ENCODE measurements at regions of chrX and their contacts with region 1.

Region 1: GRCh38 chrX:23907498-23908218 is at the starts of genes APOO and CXorf58:
- DNase-seq: peak; percentile 87
- ATAC-seq: peak; percentile 97
- H3K4me3 ChIP-seq: peak within 1 kb of the TSS; percentile 52
- H3K27ac ChIP-seq: peak within 1 kb of the TSS; percentile 76
- H3K4me1 ChIP-seq: no peaks in the 10 kb centered on the region
- H3K27me3 ChIP-seq: no peaks in the 10 kb centered on the region
- CTCF ChIP-seq: peak; percentile 85
- POLR2A ChIP-seq: no peak
- RAD21 ChIP-seq: peak; percentile 52
- total RNA-seq, gene APOO: 9.0 and 11.4 TPM in 2 replicates
- total RNA-seq, gene CXorf58: not detected in 2 replicates

Region 2: GRCh38 chrX:23742697-23743622 is 164.7 kb before region 1 on chrX and contains the start of gene ACOT9:
- CTCF ChIA-PET with region 1: interaction called, 3 read pairs
- POLR2A ChIA-PET with region 1: interaction called, 3 read pairs
- dilution Hi-C with region 1: no loop called
- in situ Hi-C with region 1: loop called (anchors 10 kb)
- intact Hi-C with region 1: no loop called
- DNase-seq: peak; percentile 95
- ATAC-seq: peak; percentile 98
- H3K4me3 ChIP-seq: peak within 1 kb of the TSS; percentile 94
- H3K27ac ChIP-seq: peak within 1 kb of the TSS; percentile 96
- H3K4me1 ChIP-seq: no peaks in the 10 kb centered on the region
- H3K27me3 ChIP-seq: no peaks in the 10 kb centered on the region
- CTCF ChIP-seq: no peak
- POLR2A ChIP-seq: peak; percentile 78
- RAD21 ChIP-seq: no peak
- total RNA-seq, gene ACOT9: 47.3 and 63.6 TPM in 2 replicates

Region 3: DNA sequence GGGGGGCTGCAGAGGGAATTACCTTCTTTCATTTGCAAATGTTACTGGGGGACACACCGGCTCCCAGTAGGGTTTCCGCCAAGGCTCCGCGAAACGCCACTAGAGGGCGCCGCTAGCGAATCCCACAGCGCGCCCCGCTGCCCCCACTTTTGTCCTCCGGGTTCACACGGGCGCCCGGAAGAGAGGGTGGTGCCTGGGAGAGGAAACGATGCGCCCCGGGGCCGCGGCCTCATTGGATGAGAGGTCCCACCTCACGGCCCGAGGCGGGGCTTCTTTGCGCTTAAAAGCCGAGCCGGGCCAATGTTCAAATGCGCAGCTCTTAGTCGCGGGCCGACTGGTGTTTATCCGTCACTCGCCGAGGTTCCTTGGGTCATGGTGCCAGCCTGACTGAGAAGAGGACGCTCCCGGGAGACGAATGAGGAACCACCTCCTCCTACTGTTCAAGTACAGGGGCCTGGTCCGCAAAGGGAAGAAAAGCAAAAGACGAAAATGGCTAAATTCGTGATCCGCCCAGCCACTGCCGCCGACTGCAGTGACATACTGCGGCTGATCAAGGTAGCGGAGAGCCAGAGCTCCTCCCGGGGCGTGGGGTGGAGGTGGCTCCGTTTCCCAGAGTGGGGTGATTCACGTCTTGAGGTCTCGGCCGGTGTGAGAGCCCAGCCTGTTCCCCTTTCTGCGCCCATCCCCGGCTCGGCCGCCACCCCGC is 124.6 kb before region 1 on chrX and contains the start of gene SAT1:
- CTCF ChIA-PET with region 1: interaction called, 34 read pairs
- POLR2A ChIA-PET with region 1: interaction called, 4 read pairs
- dilution Hi-C with region 1: no loop called
- in situ Hi-C with region 1: loop called (anchors 10 kb)
- intact Hi-C with region 1: loop called (anchors 1 kb)
- DNase-seq: peak; percentile 91
- ATAC-seq: peak; percentile 92
- H3K4me3 ChIP-seq: peak within 1 kb of the TSS; percentile 74
- H3K27ac ChIP-seq: peak within 1 kb of the TSS; percentile 78
- H3K4me1 ChIP-seq: no peaks in the 10 kb centered on the region; the same call in 1 of the 2 replicates
- H3K27me3 ChIP-seq: no peaks in the 10 kb centered on the region
- CTCF ChIP-seq: peak; percentile 69
- POLR2A ChIP-seq: peak; percentile 100
- RAD21 ChIP-seq: peak; percentile 58
- total RNA-seq, gene SAT1: 55.9 and 112 TPM in 2 replicates

Region 4: DNA sequence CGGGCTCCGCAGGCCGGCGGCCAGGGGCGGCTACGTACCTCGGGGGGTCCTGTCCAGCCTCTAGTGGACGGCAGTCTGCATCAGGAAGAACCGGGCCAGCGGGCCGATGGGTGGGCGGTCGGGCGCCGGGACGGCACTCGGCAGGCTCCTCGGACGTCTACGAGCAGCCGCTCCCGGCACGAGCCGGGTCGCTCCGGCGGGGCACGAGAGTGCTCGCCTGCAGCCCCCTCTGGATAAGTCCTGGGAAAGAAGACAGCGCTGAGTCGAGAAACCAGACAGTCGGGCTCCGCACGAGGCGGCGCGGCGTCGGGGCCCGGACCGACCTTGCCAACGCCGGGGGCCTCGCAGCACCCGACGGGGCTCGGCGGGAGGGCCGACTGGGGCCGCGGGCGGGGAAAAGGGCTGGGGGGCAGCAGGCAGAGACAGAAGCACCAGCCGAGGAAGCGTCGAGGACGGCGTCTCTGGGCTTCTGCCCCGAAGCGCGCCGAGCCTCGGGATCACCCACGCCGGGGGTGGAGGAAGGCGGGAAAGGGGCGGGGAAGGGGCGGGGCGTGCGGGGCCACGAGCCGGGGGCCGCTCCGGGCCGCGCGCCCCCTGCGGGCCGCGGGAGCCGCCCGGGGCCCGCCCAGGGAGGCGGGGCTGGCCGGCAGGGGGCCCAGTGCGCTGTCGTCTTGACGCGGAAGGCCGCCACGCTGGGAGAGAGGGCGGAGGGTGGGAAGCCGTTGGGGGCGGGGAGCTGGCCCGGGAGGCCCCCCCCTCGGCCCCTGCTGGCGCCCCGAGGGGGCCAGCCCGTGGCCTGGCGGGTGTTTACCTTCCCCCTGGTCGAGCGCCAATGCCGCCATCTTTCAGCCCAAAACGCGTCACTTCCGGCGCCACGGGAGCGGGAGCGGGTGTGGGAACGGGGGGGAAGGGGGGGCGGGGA is 117.4 kb after region 1 on chrX:
- CTCF ChIA-PET with region 1: interaction called, 4 read pairs
- POLR2A ChIA-PET with region 1: interaction called, 4 read pairs
- dilution Hi-C with region 1: no loop called
- in situ Hi-C with region 1: no loop called
- intact Hi-C with region 1: loop called (anchors 1 kb)
- DNase-seq: peak; percentile 89
- ATAC-seq: peak; percentile 93
- H3K4me3 ChIP-seq: peak overlapping the region; percentile 99
- H3K27ac ChIP-seq: peak overlapping the region; percentile 70
- H3K4me1 ChIP-seq: no peaks in the 10 kb centered on the region
- H3K27me3 ChIP-seq: no peaks in the 10 kb centered on the region; the same call in none of the 2 replicates
- CTCF ChIP-seq: peak; percentile 53
- POLR2A ChIP-seq: peak; percentile 94
- RAD21 ChIP-seq: no peak

Region 5: DNA sequence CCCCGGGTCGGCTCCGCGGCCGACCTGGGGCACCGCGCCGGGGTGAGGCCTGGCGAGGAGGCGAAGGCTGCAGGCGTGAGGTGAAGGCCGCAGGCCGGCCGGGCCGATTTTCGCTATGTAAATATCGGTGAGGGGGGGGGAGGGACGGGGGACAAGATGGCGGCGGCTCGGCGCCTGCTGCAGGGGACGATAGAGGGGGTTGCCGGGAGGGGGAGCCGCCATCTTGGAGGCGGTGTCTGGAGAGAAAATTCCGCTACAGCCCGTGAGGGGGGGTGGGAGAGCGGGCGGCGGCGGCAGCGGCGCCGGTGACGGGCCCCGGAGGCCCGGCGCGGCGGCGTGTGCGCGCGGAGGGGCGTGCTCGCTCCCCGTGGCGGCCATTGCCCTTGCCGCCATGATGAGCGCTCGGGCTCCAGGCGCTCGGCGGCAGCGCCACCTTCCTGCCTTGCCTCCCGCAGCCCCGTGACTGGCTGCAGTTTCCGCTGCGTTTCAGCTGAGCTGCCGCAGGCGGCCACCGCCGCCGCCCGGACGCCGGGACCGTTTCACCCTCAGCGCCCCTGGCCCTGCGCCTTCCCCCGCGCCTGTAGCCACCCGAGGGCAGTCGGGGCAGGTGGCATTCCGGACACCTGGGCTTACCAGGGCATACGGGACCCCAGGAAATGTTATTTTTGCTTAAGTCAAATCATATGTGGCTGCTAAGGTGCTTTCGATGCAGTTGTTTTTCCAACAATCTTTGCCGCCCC is 242.6 kb after region 1 on chrX:
- CTCF ChIA-PET with region 1: no interaction called
- POLR2A ChIA-PET with region 1: no interaction called
- dilution Hi-C with region 1: no loop called
- in situ Hi-C with region 1: no loop called
- intact Hi-C with region 1: loop called (anchors 5 kb)
- DNase-seq: peak; percentile 92
- ATAC-seq: peak; percentile 79
- H3K4me3 ChIP-seq: peak overlapping the region; percentile 98
- H3K27ac ChIP-seq: peak overlapping the region; percentile 100
- H3K4me1 ChIP-seq: peaks cover 8% of the 10 kb centered on the region
- H3K27me3 ChIP-seq: no peaks in the 10 kb centered on the region
- CTCF ChIP-seq: peak; percentile 61
- POLR2A ChIP-seq: peak; percentile 59
- RAD21 ChIP-seq: peak; percentile 45

Region 6: DNA sequence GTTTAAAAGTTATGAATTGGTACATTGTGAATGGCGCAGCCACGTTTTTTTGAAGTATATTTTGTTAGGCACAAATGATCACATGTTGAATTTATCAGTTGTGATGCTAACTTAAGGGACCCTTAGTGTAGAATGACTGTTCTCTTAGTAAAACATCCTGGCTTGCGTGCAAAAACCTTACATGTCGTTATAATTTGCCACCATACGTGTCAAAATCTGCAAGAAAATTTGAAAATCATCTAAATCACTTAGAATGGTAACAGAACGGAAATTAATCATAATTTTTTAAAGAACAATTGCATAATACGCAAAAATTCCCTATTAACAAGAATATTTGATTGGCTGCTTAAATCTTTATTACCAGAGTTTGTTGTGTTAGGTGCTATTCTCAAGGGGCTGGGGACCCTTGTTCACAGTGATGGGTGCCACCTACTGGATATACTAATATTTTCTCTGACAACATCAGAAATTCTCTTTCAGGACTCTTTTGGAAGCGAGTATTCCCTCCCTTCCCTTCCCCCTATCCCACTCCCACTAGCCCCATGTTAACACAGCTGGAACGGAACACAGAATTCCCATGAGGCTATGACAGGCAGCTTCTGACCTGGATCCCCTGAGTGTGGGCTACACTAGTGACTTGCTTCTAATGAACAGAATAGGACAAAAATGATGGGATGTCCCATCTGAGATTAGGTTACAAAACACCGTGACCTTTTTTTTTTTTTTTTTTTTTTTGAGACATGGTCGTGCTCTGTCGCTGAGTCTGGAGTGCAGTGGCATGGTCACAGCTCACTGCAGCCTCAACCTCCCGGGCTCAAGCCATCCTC is 334.4 kb after region 1 on chrX:
- CTCF ChIA-PET with region 1: no interaction called
- POLR2A ChIA-PET with region 1: no interaction called
- dilution Hi-C with region 1: no loop called
- in situ Hi-C with region 1: no loop called
- intact Hi-C with region 1: loop called (anchors 10 kb)
- DNase-seq: peak; percentile 39
- ATAC-seq: peak; percentile 65; the same call in 1 of the 2 replicates
- H3K4me3 ChIP-seq: no peak overlapping the region
- H3K27ac ChIP-seq: no peak overlapping the region
- H3K4me1 ChIP-seq: no peaks in the 10 kb centered on the region
- H3K27me3 ChIP-seq: peaks cover 4% of the 10 kb centered on the region; the same call in 1 of the 2 replicates
- CTCF ChIP-seq: peak; percentile 49
- POLR2A ChIP-seq: no peak
- RAD21 ChIP-seq: peak; percentile 57

Measured in IMR-90 (cell line).